ENCODE measurements at regions of chr7 and their contacts with region 1.

Region 1: GRCh38 chr7:2104107-2104710 is 128.5 kb downstream of the MAD1L1 start:
- DNase-seq: peak; percentile 54 to 86 (median 72)
- H3K4me3 ChIP-seq: peak overlapping the region in 5 of 59 donors; percentile 2 to 26 (median 24)
- H3K27ac ChIP-seq: peak overlapping the region in 54 of 59 donors; percentile 45 to 100 (median 98)
- H3K27me3 ChIP-seq: no peaks in the 10 kb centered on the region
- CTCF ChIP-seq: peak in 55 of 56 donors; percentile 23 to 70 (median 52)

Region 2: GRCh38 chr7:1961701-1962276 is 142.4 kb before region 1 on chr7:
- intact Hi-C with region 1: no loop called
- DNase-seq: no peak
- H3K4me3 ChIP-seq: no peak overlapping the region
- H3K27ac ChIP-seq: no peak overlapping the region
- H3K27me3 ChIP-seq: no peaks in the 10 kb centered on the region
- CTCF ChIP-seq: no peak

Region 3: GRCh38 chr7:2157468-2158279 is 53.5 kb after region 1 on chr7:
- intact Hi-C with region 1: loop called (anchors 5 to 10 kb)
- DNase-seq: peak; percentile 41 to 89 (median 76)
- H3K4me3 ChIP-seq: no peak overlapping the region
- H3K27ac ChIP-seq: peak overlapping the region; percentile 71 to 99 (median 94)
- H3K27me3 ChIP-seq: no peaks in the 10 kb centered on the region
- CTCF ChIP-seq: peak in 3 of 56 donors; percentile 8 to 17 (median 10)

Region 4: GRCh38 chr7:2214636-2215035 is 110.4 kb after region 1 on chr7:
- intact Hi-C with region 1: loop called in 1 of 2 experiments (anchors 5 kb)
- DNase-seq: no peak
- H3K4me3 ChIP-seq: no peak overlapping the region
- H3K27ac ChIP-seq: no peak overlapping the region
- H3K27me3 ChIP-seq: no peaks in the 10 kb centered on the region
- CTCF ChIP-seq: no peak

Measured in dorsolateral prefrontal cortex (tissue), 120 donors.